CD4-positive, alpha-beta T cell (primary cell): ENCODE measurements at regions of chr20 and their contacts with region 1.

Region 1: DNA sequence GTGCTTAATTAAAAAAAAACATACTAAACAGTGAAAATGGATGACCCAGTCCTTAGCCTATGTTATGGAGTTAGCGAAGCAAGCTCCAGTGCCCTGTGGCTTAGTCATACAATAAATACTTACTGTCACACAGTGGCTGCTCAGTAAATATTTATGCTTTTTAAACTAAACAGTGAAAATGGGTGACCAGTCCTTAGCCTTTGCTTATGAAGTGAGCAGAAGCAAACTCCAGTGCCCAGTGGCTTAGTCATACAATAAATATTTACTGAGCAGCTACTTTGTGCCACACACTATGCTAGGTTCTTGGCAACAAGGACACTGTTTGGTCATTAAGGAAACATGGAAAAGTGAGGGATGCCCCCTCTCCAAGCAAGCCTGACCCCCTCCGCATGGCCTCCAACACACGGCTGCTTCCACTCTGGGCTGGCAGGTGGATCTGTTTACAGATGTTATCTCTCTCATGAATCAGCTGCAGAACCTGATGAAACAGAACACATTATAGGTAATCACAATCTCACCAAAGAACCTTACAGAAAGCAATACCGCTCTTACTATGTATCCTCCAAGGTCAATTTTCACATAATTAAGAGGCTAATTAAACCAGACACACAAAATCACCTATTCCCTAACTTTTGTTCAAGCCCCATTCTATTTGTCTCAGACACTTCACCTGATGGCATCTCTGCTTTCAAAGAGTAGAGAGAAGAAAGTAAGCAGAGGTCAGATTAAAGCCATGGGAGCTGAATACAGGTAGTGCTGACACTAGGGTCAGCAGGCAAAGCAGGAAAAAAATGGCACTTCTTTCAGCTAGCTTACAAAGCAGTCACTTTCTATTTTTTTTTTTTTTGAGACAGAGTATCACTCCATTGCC is 27.3 kb downstream of the CDK5RAP1 start:
- DNase-seq: no peak
- ATAC-seq: no peak
- H3K4me3 ChIP-seq: no peak overlapping the region
- H3K4me3 Mint-ChIP-seq: no peak overlapping the region
- H3K27ac ChIP-seq: no peak overlapping the region
- H3K27ac Mint-ChIP-seq: peak overlapping the region; percentile 94
- H3K4me1 ChIP-seq: peaks cover 46% of the 10 kb centered on the region
- H3K4me1 Mint-ChIP-seq: peaks cover 54% of the 10 kb centered on the region
- H3K27me3 ChIP-seq: no peaks in the 10 kb centered on the region
- H3K27me3 Mint-ChIP-seq: no peaks in the 10 kb centered on the region
- CTCF ChIP-seq: no peak

Region 2: GRCh38 chr20:33337531-33338165 is 36.3 kb before region 1 on chr20:
- CTCF ChIA-PET with region 1: no interaction called
- POLR2A ChIA-PET with region 1: no interaction called
- intact Hi-C with region 1: no loop called
- DNase-seq: no peak
- ATAC-seq: no peak
- H3K4me3 ChIP-seq: no peak overlapping the region
- H3K4me3 Mint-ChIP-seq: no peak overlapping the region
- H3K27ac ChIP-seq: no peak overlapping the region
- H3K27ac Mint-ChIP-seq: no peak overlapping the region
- H3K4me1 ChIP-seq: no peaks in the 10 kb centered on the region
- H3K4me1 Mint-ChIP-seq: no peaks in the 10 kb centered on the region
- H3K27me3 ChIP-seq: no peaks in the 10 kb centered on the region
- H3K27me3 Mint-ChIP-seq: no peaks in the 10 kb centered on the region
- CTCF ChIP-seq: no peak

Region 3: DNA sequence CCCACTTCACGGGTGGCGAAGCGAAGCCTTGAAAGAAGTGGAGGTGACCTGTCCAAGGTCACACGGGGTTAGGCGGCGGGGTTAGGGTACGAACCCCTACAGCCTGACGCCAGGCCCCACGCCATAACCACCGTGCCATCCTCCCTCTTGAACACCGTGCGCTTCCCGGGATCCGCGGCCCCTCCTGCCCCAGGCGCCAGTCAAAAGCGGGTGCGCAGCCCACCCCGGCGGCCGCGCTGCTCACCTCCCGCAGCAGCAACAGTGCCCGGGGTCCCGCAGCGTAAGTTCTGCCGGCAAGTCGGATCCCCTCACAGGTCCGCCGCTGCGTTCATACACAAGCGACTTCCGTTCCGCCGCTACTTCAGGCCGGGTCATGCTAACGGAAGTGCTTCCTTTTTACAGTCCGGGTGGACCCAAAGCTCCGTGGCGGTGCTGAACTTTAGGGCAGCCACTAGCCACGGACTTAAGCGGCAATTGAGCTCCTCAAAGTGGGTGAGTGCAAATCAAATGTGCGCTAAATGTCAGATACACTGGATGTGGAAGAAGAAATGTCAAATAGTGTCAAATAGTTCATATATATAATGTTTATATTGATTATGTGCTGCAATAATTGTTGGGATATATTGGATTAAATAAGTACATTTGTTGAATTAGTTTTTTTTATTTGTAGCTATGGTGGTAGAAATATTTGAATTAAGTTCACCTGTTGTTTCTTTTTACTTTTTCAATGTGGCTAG is 27.4 kb after region 1 on chr20 and contains the start of gene CDK5RAP1:
- CTCF ChIA-PET with region 1: interaction called, 5 read pairs
- POLR2A ChIA-PET with region 1: interaction called, 4 read pairs
- intact Hi-C with region 1: loop called in 1 of 2 experiments (anchors 2 kb)
- DNase-seq: peak; percentile 73 to 93 (median 78)
- ATAC-seq: peak; percentile 95
- H3K4me3 ChIP-seq: peak within 1 kb of the TSS; percentile 99
- H3K4me3 Mint-ChIP-seq: peak within 1 kb of the TSS; percentile 96
- H3K27ac ChIP-seq: peak within 1 kb of the TSS in 1 of 2 donors; percentile 24
- H3K27ac Mint-ChIP-seq: peak within 1 kb of the TSS; percentile 79
- H3K4me1 ChIP-seq: peaks cover 48% of the 10 kb centered on the region
- H3K4me1 Mint-ChIP-seq: peaks cover 64% of the 10 kb centered on the region
- H3K27me3 ChIP-seq: no peaks in the 10 kb centered on the region
- H3K27me3 Mint-ChIP-seq: no peaks in the 10 kb centered on the region
- CTCF ChIP-seq: no peak
- total RNA-seq, gene CDK5RAP1: 59.7 to 63.0 TPM

Region 4: GRCh38 chr20:33443512-33444239 is 69.7 kb after region 1 on chr20 and contains the start of gene SNTA1:
- CTCF ChIA-PET with region 1: interaction called, 3 read pairs
- POLR2A ChIA-PET with region 1: interaction called, 3 read pairs
- intact Hi-C with region 1: loop called in 1 of 2 experiments (anchors 2 kb)
- DNase-seq: peak; percentile 74 to 95 (median 86)
- ATAC-seq: peak; percentile 57
- H3K4me3 ChIP-seq: peak within 1 kb of the TSS; percentile 90
- H3K4me3 Mint-ChIP-seq: peak within 1 kb of the TSS; percentile 95
- H3K27ac ChIP-seq: peak within 1 kb of the TSS; percentile 72 to 80
- H3K27ac Mint-ChIP-seq: peak within 1 kb of the TSS; percentile 94
- H3K4me1 ChIP-seq: peaks cover 25% of the 10 kb centered on the region
- H3K4me1 Mint-ChIP-seq: peaks cover 22% of the 10 kb centered on the region
- H3K27me3 ChIP-seq: no peaks in the 10 kb centered on the region
- H3K27me3 Mint-ChIP-seq: no peaks in the 10 kb centered on the region
- CTCF ChIP-seq: no peak
- total RNA-seq, gene SNTA1: 5.0 to 5.2 TPM

Region 5: GRCh38 chr20:34312544-34313217 is 938.7 kb after region 1 on chr20:
- CTCF ChIA-PET with region 1: no interaction called
- POLR2A ChIA-PET with region 1: no interaction called
- intact Hi-C with region 1: no loop called
- DNase-seq: peak; percentile 77 to 92 (median 84)
- ATAC-seq: peak; percentile 100
- H3K4me3 ChIP-seq: no peak overlapping the region
- H3K4me3 Mint-ChIP-seq: no peak overlapping the region
- H3K27ac ChIP-seq: no peak overlapping the region
- H3K27ac Mint-ChIP-seq: no peak overlapping the region
- H3K4me1 ChIP-seq: peaks cover 20% of the 10 kb centered on the region
- H3K4me1 Mint-ChIP-seq: peaks cover 6% of the 10 kb centered on the region
- H3K27me3 ChIP-seq: peaks cover 14 to 20% of the 10 kb centered on the region in 2 experiments
- H3K27me3 Mint-ChIP-seq: peaks cover 24% of the 10 kb centered on the region
- CTCF ChIP-seq: peak; percentile 100